Activated naive CD4-positive, alpha-beta T cell treated with anti-CD3 and anti-CD28 coated beads for 36 hours (primary cell): ENCODE measurements at regions of chr15 and their contacts with region 1.

Region 1: DNA sequence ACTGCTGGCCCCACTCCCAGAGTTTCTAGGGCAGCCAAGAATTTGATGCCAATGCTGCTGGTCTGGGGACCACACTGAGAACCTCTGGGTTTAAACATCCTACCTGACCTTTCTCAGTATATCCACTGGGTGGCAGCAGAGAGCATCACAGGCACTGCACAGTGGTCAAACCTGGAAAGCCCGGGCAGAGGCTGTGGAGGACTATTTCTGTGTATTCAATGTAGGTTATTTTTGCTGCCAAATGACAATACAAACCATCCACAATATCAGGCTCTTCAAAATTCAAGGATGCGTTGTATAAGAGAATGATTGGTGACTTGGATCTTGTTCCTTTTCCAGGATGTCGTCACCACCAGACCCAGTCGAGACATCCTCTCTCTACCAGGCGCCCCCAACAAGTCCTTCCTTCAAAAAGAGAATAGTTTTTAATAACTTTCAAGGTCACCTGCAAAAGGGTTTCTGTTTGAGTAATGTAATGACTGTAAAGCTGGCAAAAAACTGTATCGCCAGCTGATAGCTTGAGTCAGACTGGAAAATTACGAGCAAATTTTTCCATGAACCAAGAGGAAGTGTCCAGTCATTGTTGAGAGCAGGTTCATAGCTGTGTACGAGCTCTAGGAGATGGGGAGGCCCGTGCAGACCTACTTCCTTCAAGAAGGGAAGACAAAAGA is 30.5 kb upstream of the MYZAP start:
- DNase-seq: peak; percentile 72
- H3K4me3 Mint-ChIP-seq: no peak overlapping the region
- H3K27ac Mint-ChIP-seq: peak overlapping the region; percentile 28
- H3K4me1 Mint-ChIP-seq: peaks cover 42% of the 10 kb centered on the region
- H3K27me3 Mint-ChIP-seq: no peaks in the 10 kb centered on the region

Region 2: GRCh38 chr15:57550640-57551039 is 10.5 kb before region 1 on chr15:
- CTCF ChIA-PET with region 1: interaction called, 10 read pairs
- intact Hi-C with region 1: no loop called
- DNase-seq: no peak
- H3K4me3 Mint-ChIP-seq: no peak overlapping the region
- H3K27ac Mint-ChIP-seq: no peak overlapping the region
- H3K4me1 Mint-ChIP-seq: no peaks in the 10 kb centered on the region
- H3K27me3 Mint-ChIP-seq: no peaks in the 10 kb centered on the region

Region 3: DNA sequence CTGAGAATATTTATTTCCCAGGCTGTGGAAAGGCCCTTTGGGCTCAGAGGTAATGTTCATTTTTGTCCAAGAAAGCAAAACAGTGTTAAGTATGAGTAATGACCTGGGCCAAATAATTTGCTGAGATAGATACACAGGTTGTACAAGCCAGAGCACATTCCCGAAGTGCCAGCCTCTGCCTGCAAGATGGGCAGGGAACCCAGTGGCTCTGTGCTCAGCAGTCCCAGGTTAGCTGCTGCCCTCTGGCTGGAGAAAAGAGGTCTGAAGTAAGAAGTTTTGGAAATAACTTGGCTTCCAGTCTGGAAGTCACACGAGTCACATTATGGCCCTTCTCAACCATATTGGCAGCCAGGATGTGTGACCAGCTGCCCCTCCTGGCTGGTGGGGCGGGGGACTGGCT is 50.8 kb after region 1 on chr15:
- CTCF ChIA-PET with region 1: interaction called, 11 read pairs
- intact Hi-C with region 1: loop called (anchors 1 kb)
- DNase-seq: peak; percentile 43
- H3K4me3 Mint-ChIP-seq: no peak overlapping the region
- H3K27ac Mint-ChIP-seq: no peak overlapping the region
- H3K4me1 Mint-ChIP-seq: no peaks in the 10 kb centered on the region
- H3K27me3 Mint-ChIP-seq: no peaks in the 10 kb centered on the region

Region 4: GRCh38 chr15:57655809-57656208 is 94.6 kb after region 1 on chr15:
- CTCF ChIA-PET with region 1: interaction called, 8 read pairs
- intact Hi-C with region 1: loop called (anchors 1 kb)
- DNase-seq: no peak
- H3K4me3 Mint-ChIP-seq: no peak overlapping the region
- H3K27ac Mint-ChIP-seq: no peak overlapping the region
- H3K4me1 Mint-ChIP-seq: no peaks in the 10 kb centered on the region
- H3K27me3 Mint-ChIP-seq: no peaks in the 10 kb centered on the region

Region 5: GRCh38 chr15:57732526-57733331 is 171.6 kb after region 1 on chr15:
- CTCF ChIA-PET with region 1: interaction called, 4 read pairs
- intact Hi-C with region 1: loop called (anchors 2 kb)
- DNase-seq: peak; percentile 69
- H3K4me3 Mint-ChIP-seq: no peak overlapping the region
- H3K27ac Mint-ChIP-seq: no peak overlapping the region
- H3K4me1 Mint-ChIP-seq: peaks cover 8% of the 10 kb centered on the region
- H3K27me3 Mint-ChIP-seq: no peaks in the 10 kb centered on the region

Region 6: GRCh38 chr15:58065445-58066041 is 504.4 kb after region 1 on chr15 and contains the start of gene ALDH1A2:
- CTCF ChIA-PET with region 1: interaction called, 4 read pairs
- intact Hi-C with region 1: loop called (anchors 2 kb)
- DNase-seq: peak; percentile 13
- H3K4me3 Mint-ChIP-seq: peak within 1 kb of the TSS; percentile 43
- H3K27ac Mint-ChIP-seq: no peak within 1 kb of the TSS
- H3K4me1 Mint-ChIP-seq: no peaks in the 10 kb centered on the region
- H3K27me3 Mint-ChIP-seq: peaks cover 34% of the 10 kb centered on the region
- total RNA-seq, gene ALDH1A2: not detected